ENCODE measurements at regions of chr21 and their contacts with region 1.

Region 1: DNA sequence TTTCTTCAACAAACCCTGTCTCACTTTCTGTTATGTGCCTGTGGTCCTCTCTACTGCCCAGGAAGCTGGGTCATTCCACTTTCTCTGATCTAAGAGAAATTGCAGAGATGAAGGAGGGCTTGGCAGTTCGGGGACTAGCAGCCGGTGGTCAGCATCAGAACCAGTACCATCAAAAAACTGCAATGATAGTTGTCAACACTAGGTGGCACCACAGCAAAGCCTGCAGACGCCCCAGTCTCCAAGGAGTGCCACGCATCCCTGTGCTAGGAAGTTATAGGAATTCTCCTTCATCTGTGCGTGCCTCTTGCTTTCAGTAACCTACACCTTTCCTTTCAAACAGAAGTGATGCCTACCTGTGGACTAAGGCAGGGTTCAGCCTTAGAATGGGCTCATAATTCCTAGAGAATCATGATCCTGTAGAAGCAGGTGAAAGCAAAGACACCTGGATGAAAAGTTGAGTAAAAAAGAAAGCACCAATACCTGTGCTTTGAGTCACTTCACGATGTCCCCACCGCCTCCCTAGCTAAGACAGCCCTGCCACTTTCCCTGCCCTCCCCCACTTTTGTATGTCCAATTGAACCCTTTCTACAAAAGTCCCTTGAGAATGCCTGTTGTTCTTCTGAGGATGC is 129.2 kb downstream of the ADAMTS1 start:
- DNase-seq: peak in 4 of 14 experiments; percentile 14 to 50 (median 33)
- ATAC-seq: no peak
- H3K4me3 ChIP-seq: no peak overlapping the region
- H3K4me3 Mint-ChIP-seq: no peak overlapping the region
- H3K27ac ChIP-seq: no peak overlapping the region
- H3K27ac Mint-ChIP-seq: no peak overlapping the region
- H3K4me1 ChIP-seq: no peaks in the 10 kb centered on the region
- H3K4me1 Mint-ChIP-seq: no peaks in the 10 kb centered on the region
- H3K27me3 ChIP-seq: peaks cover 0 to 4% of the 10 kb centered on the region in 2 experiments
- H3K27me3 Mint-ChIP-seq: peaks cover 4% of the 10 kb centered on the region
- CTCF ChIP-seq: no peak

Region 2: DNA sequence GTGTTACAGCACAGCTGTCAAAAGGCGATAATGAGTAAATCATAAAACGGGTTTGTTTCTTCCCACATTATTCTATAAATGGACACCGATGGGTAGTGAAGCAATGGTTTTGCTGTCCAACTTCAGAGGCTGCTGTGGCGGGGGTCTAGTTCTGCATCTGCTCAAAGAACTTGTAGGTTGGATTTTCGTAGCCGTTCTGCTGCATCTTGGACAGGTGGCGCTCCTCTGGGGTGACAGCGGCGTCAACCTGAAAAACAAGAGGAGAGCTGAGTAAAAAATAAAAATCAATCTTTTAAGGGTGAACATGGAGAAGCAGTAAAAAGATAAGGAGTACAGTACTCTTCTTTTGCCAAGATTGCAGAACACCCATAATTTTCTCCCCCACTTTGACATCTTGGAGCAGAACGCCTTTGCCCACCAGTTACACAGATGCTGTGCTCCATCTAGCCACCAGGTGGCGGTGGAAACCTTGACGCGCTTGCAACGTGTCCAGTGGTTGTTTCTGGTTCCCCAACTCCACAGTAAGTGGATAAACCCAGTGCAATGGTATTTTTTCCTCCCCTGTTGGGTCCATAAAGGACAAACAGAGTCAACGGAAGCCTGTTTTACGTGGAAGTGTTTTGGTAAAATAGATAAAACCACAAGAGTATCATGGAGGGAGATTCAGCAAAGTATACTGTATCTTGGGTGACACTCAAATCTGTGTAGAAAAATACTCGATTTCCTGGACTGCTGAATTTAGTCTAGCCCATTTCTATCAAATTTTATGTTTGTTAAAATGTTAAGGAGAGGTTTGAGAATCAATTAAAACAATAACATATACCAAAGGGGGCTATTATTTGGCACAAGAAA is 834.2 kb before region 1 on chr21:
- CTCF ChIA-PET with region 1: no interaction called
- POLR2A ChIA-PET with region 1: no interaction called
- intact Hi-C with region 1: loop called (anchors 1 to 5 kb)
- DNase-seq: peak; percentile 19 to 73 (median 46)
- ATAC-seq: peak; percentile 73
- H3K4me3 ChIP-seq: no peak overlapping the region
- H3K4me3 Mint-ChIP-seq: no peak overlapping the region
- H3K27ac ChIP-seq: no peak overlapping the region
- H3K27ac Mint-ChIP-seq: no peak overlapping the region
- H3K4me1 ChIP-seq: no peaks in the 10 kb centered on the region
- H3K4me1 Mint-ChIP-seq: no peaks in the 10 kb centered on the region
- H3K27me3 ChIP-seq: no peaks in the 10 kb centered on the region
- H3K27me3 Mint-ChIP-seq: no peaks in the 10 kb centered on the region
- CTCF ChIP-seq: peak; percentile 88

Region 3: GRCh38 chr21:25895565-25896205 is 820.3 kb before region 1 on chr21:
- CTCF ChIA-PET with region 1: no interaction called
- POLR2A ChIA-PET with region 1: no interaction called
- intact Hi-C with region 1: loop called (anchors 5 kb)
- DNase-seq: peak in 5 of 14 experiments; percentile 9 to 50 (median 43)
- ATAC-seq: peak; percentile 78
- H3K4me3 ChIP-seq: no peak overlapping the region
- H3K4me3 Mint-ChIP-seq: no peak overlapping the region
- H3K27ac ChIP-seq: no peak overlapping the region
- H3K27ac Mint-ChIP-seq: peak overlapping the region; percentile 19
- H3K4me1 ChIP-seq: no peaks in the 10 kb centered on the region
- H3K4me1 Mint-ChIP-seq: peaks cover 17% of the 10 kb centered on the region
- H3K27me3 ChIP-seq: no peaks in the 10 kb centered on the region
- H3K27me3 Mint-ChIP-seq: no peaks in the 10 kb centered on the region
- CTCF ChIP-seq: peak; percentile 56